Left cardiac atrium (tissue), 4 donors: ENCODE measurements at regions of chr20 and their contacts with region 1.

Region 1: GRCh38 chr20:25623736-25624499 is at the start of gene NANP:
- DNase-seq: peak; percentile 98
- ATAC-seq: peak; percentile 95 to 96
- total RNA-seq, gene NANP: 4.4 to 6.7 TPM

Region 2: DNA sequence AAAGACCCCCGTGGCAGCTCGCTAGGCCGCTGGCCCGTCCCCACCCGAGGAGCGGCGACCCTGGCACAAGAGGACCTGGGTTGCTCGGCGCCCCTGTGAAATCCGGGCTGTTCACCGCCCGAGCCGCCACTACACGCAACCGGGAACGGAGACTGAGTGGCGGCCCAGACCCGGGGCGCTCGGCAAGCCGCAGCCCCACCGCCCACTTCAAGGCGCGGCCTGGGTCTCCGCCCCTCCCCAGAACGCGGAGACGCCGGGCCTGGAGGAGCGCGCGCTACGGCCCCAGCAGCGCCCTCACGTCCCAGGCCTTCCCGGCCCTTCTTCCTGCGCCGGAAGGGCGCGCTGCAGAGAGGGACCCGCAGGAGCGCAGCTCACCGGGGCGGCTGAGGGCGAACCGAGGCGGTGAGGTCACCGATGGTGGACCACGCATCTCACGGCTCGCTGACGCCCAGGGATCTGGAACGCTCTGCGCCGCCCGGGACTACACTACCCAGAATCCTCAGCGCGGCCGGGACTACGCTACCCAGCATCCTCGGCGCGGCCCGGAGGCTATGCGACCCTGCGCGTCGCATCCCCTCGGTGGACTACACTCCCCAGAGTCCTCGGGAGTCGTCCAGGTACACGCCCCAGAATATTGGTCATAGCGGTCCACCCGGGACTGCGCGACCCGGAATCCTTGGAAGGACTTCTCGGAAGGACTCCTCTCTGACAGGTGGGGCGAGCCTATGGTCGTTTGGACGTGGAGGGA is 72.6 kb after region 1 on chr20 and contains the start of gene ZNF337:
- intact Hi-C with region 1: loop called in 1 of 2 experiments (anchors 10 kb)
- DNase-seq: peak; percentile 98
- ATAC-seq: peak; percentile 100
- total RNA-seq, gene ZNF337: 7.3 to 9.1 TPM